ENCODE measurements at regions of chr4 and their contacts with region 1.

Region 1: GRCh38 chr4:142535009-142535408 is 311.1 kb downstream of the INPP4B start:
- DNase-seq: no peak
- ATAC-seq: no peak

Region 2: DNA sequence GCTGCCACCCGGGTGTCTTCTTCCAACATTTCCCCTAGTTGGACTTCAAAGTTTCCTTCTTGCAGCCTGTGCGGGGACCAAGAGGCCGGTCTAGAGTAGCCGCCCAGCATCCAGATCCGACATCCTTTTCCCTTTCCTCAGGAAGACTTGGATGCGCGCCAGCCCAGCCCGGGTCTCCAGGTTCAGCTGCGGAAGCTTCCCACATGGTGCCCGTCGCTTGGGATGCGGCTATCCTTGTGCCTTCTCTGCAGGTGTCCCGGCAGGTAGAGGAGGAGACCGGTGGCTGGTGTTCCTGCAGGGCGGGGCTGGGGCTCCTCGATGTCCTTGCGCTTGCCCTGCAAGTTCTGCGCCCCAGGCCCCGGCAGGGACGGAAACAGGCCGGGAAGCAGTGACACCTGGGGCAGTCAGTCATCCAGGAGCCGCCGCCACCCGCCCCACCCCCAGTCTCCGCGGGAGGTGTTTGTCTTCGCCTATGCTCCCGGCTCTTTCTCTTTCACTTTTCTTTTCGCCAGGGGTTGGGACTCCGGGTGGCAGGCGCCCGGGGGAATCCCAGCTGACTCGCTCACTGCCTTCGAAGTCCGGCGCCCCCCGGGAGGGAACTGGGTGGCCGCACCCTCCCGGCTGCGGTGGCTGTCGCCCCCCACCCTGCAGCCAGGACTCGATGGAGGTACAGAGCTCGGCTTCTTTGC is 898.8 kb before region 1 on chr4 and contains the start of gene IL15:
- intact Hi-C with region 1: no loop called
- DNase-seq: peak; percentile 75
- ATAC-seq: peak; percentile 85
- total RNA-seq, gene IL15: 11.5 TPM

Region 3: DNA sequence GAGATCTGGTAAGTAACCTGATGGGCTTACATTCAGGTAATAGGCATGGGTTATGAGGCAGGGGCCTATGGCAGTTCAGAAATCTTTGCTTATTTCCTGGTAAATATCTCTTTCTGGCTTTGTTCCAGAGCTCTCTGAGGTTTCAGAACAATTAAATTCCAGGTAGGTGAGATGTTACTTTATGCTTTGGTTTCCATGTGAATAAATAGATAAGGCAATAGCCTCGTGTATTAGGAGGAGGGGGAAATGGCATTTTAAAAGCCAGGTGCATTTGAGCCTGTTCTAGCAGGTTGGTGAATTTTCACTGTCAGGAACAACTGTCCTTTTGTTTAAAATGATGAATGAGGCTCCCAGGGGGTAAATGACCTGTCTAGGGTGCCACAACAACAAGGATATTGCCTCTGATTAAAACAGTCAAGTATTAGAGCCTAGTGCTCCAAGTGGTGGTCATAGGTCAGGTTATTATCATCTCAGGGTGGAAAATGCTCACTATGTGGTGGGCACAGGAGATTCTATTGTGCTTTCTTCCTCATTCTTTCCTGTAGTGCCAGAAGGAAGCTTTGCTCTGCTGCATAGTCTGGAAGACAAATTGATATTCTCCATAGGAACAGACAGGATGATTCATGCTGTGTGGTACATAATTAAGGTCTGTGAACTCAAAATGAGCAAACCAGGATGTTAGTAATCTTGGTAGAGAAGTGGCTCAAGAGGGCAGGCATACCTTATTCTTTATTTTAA is 14.9 kb after region 1 on chr4:
- intact Hi-C with region 1: loop called (anchors 1 kb)
- DNase-seq: no peak
- ATAC-seq: no peak

Measured in sciatic nerve (tissue), 2 donors.